CD8-positive, alpha-beta T cell (primary cell): ENCODE measurements at regions of chr12 and their contacts with region 1.

Region 1: DNA sequence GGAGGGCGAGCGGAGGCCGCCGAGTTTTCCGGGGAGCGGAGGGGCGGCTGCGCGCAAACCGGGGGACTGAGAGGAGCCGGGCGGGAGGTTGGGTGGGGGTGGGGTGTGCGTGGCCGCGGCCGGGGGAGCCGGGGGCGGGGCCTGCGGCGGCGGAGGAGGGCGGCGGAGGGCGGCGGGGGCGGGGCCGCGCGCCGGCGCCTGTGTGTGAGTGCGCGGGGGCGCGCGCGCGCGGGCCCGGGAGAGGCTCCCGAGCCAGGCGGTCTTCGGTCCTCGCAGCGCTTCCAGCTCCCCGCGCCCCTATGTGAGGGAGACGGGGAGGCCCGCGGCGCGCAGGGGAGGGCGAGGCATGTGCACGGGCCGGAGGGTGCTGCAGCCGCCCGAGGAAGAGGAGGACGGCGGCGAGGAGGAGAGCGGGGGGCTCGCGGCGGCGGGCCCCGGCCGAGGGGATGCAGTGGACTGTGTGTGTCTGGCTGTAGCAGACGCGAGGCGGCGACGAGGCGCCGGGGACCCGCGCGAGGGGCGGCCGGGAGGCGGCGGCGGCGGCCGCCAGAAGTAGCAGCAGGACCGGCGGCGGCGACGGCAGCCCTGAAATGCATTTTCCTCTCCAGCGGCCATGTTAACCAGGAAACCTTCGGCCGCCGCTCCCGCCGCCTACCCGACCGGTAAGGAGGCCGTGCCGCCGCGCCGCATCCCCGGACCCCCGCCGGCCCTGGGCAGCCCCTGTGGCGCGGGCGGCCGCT is at the start of gene DYRK2:
- DNase-seq: peak; percentile 58 to 91 (median 78)
- ATAC-seq: peak; percentile 54
- H3K4me3 ChIP-seq: peak within 1 kb of the TSS; percentile 85 to 88
- H3K4me3 Mint-ChIP-seq: peak within 1 kb of the TSS; percentile 98
- H3K27ac ChIP-seq: peak within 1 kb of the TSS; percentile 79 to 82
- H3K27ac Mint-ChIP-seq: peak within 1 kb of the TSS; percentile 98
- H3K4me1 ChIP-seq: peaks cover 28% of the 10 kb centered on the region
- H3K4me1 Mint-ChIP-seq: peaks cover 42% of the 10 kb centered on the region
- H3K27me3 ChIP-seq: no peaks in the 10 kb centered on the region
- H3K27me3 Mint-ChIP-seq: no peaks in the 10 kb centered on the region
- CTCF ChIP-seq: no peak
- total RNA-seq, gene DYRK2: 118 to 122 TPM

Region 2: DNA sequence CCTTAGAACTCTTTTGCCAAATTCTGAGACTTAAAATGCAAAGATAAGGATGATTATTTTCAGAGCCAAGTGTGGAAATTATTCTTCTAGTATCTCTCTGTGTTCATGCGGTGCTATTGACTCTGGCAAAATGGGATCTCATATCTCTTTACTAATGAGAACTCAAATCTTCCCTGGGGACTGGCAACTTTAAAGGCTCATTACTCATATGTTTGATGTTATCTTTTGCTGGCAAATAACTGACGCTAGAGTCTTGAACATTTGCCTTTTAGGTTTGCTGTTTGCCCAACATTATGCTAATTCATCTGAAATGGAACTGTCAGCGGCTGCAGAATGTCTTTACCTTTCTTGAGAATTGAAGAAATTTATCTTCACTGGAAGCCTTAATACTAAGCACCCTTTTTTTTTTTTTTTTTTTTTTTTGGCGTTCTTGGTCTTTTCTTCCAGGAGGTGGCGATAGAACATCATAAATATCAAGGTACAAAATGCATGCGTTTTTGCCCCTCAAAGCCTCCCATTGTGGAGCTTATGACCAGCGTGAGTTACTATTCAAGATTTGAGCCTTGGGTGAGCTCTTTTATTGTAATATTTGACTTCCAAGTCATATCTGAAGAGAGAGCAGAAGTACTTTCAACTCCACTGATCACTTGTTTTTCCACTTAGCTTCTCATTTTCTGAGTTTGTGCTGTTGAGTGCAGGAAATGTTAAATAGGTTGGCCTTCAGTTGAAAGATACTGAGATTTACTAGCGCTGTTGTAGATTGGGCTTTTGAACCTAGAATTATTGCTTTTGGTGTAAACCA is 292.9 kb before region 1 on chr12:
- CTCF ChIA-PET with region 1: interaction called, 11 read pairs
- POLR2A ChIA-PET with region 1: interaction called, 7 read pairs
- intact Hi-C with region 1: no loop called
- DNase-seq: peak in 4 of 9 experiments; percentile 11 to 76 (median 44)
- ATAC-seq: peak; percentile 61
- H3K4me3 ChIP-seq: no peak overlapping the region
- H3K4me3 Mint-ChIP-seq: no peak overlapping the region
- H3K27ac ChIP-seq: no peak overlapping the region
- H3K27ac Mint-ChIP-seq: no peak overlapping the region
- H3K4me1 ChIP-seq: peaks cover 5% of the 10 kb centered on the region
- H3K4me1 Mint-ChIP-seq: peaks cover 7% of the 10 kb centered on the region
- H3K27me3 ChIP-seq: no peaks in the 10 kb centered on the region
- H3K27me3 Mint-ChIP-seq: no peaks in the 10 kb centered on the region
- CTCF ChIP-seq: peak; percentile 76

Region 3: DNA sequence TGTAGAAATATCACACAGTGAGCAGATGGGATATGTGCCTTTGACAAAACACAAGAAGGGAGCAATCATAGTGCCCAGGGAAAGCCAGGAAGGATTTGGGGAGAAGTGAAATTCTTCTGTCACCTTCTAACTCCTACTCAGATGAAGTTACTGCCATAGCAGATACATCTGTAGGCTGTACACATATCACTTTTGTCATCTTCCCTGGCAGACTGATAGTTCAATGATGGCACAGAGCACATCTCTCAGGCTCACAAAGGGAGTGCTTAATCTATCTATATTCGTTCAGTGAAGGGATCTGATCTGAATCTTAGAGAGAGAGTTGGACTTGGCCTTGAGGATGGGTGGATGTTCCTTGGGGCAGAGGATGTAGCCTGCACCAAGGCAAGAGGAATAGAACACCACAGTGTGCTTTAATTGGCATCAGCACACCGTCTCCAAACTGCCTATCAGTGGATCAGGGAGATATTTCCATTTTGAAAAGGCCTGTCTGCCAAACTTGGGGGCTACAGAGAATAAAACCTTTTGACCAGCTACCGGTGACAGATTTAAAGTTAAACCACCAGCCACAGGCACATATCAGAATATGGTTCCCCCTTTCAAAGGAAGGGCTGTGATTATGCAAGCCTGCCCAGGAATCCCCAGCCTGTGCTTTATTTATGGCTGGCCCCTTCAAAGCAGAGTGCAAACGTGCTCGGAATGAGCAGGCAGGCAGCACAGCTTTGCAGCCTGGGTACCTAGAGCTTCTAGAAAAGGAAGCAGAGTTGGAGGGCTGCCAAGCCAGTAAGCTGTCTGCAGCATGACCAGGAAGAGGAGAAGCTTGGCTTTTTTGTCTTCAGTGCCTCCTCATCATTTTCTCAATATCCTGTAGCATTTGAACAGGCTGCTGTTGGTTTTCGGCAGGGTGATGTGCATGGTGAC is 165.7 kb before region 1 on chr12:
- CTCF ChIA-PET with region 1: interaction called, 7 read pairs
- POLR2A ChIA-PET with region 1: interaction called, 9 read pairs
- intact Hi-C with region 1: loop called in 1 of 2 experiments (anchors 1 kb)
- DNase-seq: peak; percentile 46 to 91 (median 85)
- ATAC-seq: peak; percentile 91
- H3K4me3 ChIP-seq: no peak overlapping the region
- H3K4me3 Mint-ChIP-seq: peak overlapping the region; percentile 12
- H3K27ac ChIP-seq: peak overlapping the region; percentile 23 to 58
- H3K27ac Mint-ChIP-seq: peak overlapping the region; percentile 80
- H3K4me1 ChIP-seq: peaks cover 40% of the 10 kb centered on the region
- H3K4me1 Mint-ChIP-seq: peaks cover 45% of the 10 kb centered on the region
- H3K27me3 ChIP-seq: no peaks in the 10 kb centered on the region
- H3K27me3 Mint-ChIP-seq: no peaks in the 10 kb centered on the region
- CTCF ChIP-seq: no peak

Region 4: GRCh38 chr12:67578976-67579661 is 69.6 kb before region 1 on chr12:
- CTCF ChIA-PET with region 1: interaction called, 16 read pairs
- POLR2A ChIA-PET with region 1: interaction called, 23 read pairs
- intact Hi-C with region 1: loop called (anchors 1 to 5 kb)
- DNase-seq: peak in 6 of 9 experiments; percentile 4 to 71 (median 28)
- ATAC-seq: peak; percentile 78
- H3K4me3 ChIP-seq: peak overlapping the region; percentile 4 to 21
- H3K4me3 Mint-ChIP-seq: peak overlapping the region; percentile 56
- H3K27ac ChIP-seq: peak overlapping the region; percentile 11 to 76
- H3K27ac Mint-ChIP-seq: peak overlapping the region; percentile 69
- H3K4me1 ChIP-seq: peaks cover 34% of the 10 kb centered on the region
- H3K4me1 Mint-ChIP-seq: peaks cover 57% of the 10 kb centered on the region
- H3K27me3 ChIP-seq: no peaks in the 10 kb centered on the region
- H3K27me3 Mint-ChIP-seq: no peaks in the 10 kb centered on the region
- CTCF ChIP-seq: no peak

Region 5: GRCh38 chr12:67630373-67631088 is 18.2 kb before region 1 on chr12:
- CTCF ChIA-PET with region 1: interaction called, 22 read pairs
- POLR2A ChIA-PET with region 1: interaction called, 143 read pairs
- intact Hi-C with region 1: loop called (anchors 1 kb)
- DNase-seq: peak; percentile 72 to 97 (median 87)
- ATAC-seq: peak; percentile 98
- H3K4me3 ChIP-seq: peak overlapping the region; percentile 23 to 33
- H3K4me3 Mint-ChIP-seq: peak overlapping the region; percentile 75
- H3K27ac ChIP-seq: peak overlapping the region; percentile 67 to 70
- H3K27ac Mint-ChIP-seq: peak overlapping the region; percentile 95
- H3K4me1 ChIP-seq: peaks cover 93% of the 10 kb centered on the region
- H3K4me1 Mint-ChIP-seq: peaks cover 92% of the 10 kb centered on the region
- H3K27me3 ChIP-seq: no peaks in the 10 kb centered on the region
- H3K27me3 Mint-ChIP-seq: no peaks in the 10 kb centered on the region
- CTCF ChIP-seq: peak; percentile 64

Region 6: GRCh38 chr12:67885375-67886169 is 236.9 kb after region 1 on chr12:
- CTCF ChIA-PET with region 1: no interaction called
- POLR2A ChIA-PET with region 1: no interaction called
- intact Hi-C with region 1: no loop called
- DNase-seq: no peak
- ATAC-seq: no peak
- H3K4me3 ChIP-seq: no peak overlapping the region
- H3K4me3 Mint-ChIP-seq: no peak overlapping the region
- H3K27ac ChIP-seq: no peak overlapping the region
- H3K27ac Mint-ChIP-seq: no peak overlapping the region
- H3K4me1 ChIP-seq: no peaks in the 10 kb centered on the region
- H3K4me1 Mint-ChIP-seq: peaks cover 1% of the 10 kb centered on the region
- H3K27me3 ChIP-seq: no peaks in the 10 kb centered on the region
- H3K27me3 Mint-ChIP-seq: no peaks in the 10 kb centered on the region
- CTCF ChIP-seq: no peak

Region 7: GRCh38 chr12:67943226-67943892 is 294.7 kb after region 1 on chr12:
- CTCF ChIA-PET with region 1: interaction called, 18 read pairs
- POLR2A ChIA-PET with region 1: interaction called, 3 read pairs
- intact Hi-C with region 1: loop called (anchors 1 to 2 kb)
- DNase-seq: peak; percentile 30 to 80 (median 69)
- ATAC-seq: peak; percentile 78
- H3K4me3 ChIP-seq: no peak overlapping the region
- H3K4me3 Mint-ChIP-seq: no peak overlapping the region
- H3K27ac ChIP-seq: no peak overlapping the region
- H3K27ac Mint-ChIP-seq: no peak overlapping the region
- H3K4me1 ChIP-seq: no peaks in the 10 kb centered on the region
- H3K4me1 Mint-ChIP-seq: peaks cover 7% of the 10 kb centered on the region
- H3K27me3 ChIP-seq: no peaks in the 10 kb centered on the region
- H3K27me3 Mint-ChIP-seq: peaks cover 6% of the 10 kb centered on the region
- CTCF ChIP-seq: peak; percentile 83

Region 8: GRCh38 chr12:68807576-68808387 is 1159.1 kb after region 1 on chr12 and contains the start of gene MDM2:
- CTCF ChIA-PET with region 1: no interaction called
- POLR2A ChIA-PET with region 1: no interaction called
- intact Hi-C with region 1: loop called in 1 of 2 experiments (anchors 10 kb)
- DNase-seq: peak; percentile 94 to 99 (median 97)
- ATAC-seq: peak; percentile 91
- H3K4me3 ChIP-seq: peak within 1 kb of the TSS; percentile 97
- H3K4me3 Mint-ChIP-seq: peak within 1 kb of the TSS; percentile 95
- H3K27ac ChIP-seq: peak within 1 kb of the TSS; percentile 86 to 95
- H3K27ac Mint-ChIP-seq: peak within 1 kb of the TSS; percentile 97
- H3K4me1 ChIP-seq: peaks cover 24% of the 10 kb centered on the region
- H3K4me1 Mint-ChIP-seq: peaks cover 30% of the 10 kb centered on the region
- H3K27me3 ChIP-seq: no peaks in the 10 kb centered on the region
- H3K27me3 Mint-ChIP-seq: no peaks in the 10 kb centered on the region
- CTCF ChIP-seq: peak; percentile 66
- total RNA-seq, gene MDM2: 95.1 to 98.0 TPM